GM13976 (cell line): ENCODE measurements at regions of chr11 and their contacts with region 1.

Region 1: GRCh38 chr11:75532200-75533048 is 6.7 kb upstream of the GDPD5 start:
- DNase-seq: peak; percentile 78
- CTCF ChIP-seq: peak; percentile 84

Region 2: DNA sequence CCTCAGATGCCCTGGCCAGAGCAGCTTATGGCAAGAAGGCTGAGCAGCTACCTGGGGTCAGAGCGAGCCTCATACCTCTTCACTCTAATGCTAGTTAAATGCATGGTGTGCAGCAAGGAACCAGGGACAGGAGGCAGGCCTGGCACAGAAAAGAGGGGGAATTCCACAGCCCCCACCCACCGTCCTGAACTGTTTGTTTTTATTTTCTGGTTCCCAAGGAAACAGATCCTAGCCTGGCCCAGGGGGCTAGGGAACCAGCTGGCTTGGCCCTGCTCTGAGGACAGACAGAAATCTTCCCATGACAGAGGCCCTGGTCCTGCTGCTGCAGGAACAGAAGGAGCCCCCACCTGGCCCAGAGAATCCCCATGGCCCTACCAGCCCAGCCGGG is 341.1 kb before region 1 on chr11:
- in situ Hi-C with region 1: no loop called
- DNase-seq: no peak
- CTCF ChIP-seq: no peak

Region 3: DNA sequence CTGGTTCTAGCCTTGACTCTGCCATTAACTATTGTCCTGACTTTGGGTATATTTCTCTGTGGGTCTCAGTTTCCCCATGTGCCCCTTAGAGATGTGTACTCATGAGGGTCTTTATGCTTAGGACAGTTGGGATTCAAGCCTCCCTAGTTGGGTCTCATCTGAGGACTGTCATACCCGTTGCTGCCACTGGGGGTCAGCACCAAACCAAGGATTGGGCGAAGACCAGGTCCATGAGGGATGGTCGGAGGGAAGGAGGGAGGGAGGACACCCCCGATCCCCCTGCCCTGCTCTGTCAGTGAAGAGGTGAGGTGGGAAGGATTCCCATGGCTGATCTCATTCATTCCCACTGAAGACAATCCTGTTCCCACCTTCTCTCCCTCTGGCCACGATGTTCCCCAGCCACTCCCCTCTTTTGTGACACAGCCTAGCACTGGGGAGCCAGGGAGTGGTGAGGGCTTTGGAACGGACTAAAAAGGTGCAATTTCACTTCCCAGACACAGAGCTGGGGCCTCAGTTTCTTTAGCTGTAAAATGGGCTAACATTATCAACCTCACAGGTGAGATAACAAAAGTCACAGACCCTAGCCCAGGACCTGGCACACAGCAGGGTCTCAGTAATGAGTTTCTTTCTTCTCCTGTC is 87.0 kb before region 1 on chr11:
- in situ Hi-C with region 1: loop called (anchors 5 kb)
- DNase-seq: peak; percentile 85
- CTCF ChIP-seq: peak; percentile 97